Transverse colon (tissue), 4 donors: ENCODE measurements at regions of chr17 and their contacts with region 1.

Region 1: DNA sequence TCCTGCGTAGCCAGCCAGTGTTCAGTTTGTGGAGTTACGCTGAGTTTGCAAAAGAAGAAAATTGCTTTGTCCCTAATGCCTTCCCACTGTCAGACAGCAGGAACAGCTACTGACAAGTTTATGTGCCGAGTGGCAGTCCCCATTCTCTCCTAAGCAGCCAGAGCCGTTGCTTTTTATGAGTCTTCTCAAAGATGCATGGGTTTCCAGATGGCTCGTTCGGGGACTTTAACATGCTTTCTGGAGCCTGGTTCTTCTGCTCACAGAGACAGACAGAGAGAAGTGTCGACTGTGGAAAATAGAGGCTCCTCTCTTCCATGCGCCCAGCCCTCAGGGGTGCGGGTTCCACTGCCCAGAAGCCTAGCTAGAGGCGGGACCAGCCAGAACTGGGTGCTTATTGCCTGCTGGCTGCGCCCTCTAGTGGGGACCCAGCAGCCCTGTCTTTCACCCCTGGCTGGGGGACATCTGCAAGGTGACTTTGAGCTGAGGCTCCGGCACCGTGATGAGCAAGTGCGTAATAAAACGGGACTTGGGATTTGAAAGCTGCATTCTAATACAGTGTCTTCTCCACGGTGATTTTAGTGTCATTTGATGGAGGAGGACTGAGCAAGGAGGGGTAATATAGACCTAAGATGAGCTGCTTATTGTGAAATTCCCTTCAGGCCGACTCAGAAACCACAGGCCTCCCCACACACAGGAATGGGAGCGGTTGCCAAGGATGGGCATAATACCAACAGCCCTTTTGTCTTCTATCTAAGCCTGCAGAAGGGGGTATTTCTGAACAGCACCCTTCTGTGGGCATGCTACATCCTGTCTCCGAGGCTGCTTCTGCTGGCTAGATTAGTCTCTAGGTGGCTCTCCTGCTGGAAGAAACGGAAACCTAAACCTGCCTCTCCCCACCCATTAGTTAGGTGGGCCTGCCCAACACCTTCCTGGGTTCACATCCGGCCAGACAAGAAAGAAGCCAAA is 73.1 kb downstream of the CCDC182 start:
- DNase-seq: peak; percentile 71
- H3K4me3 ChIP-seq: no peak overlapping the region
- H3K27ac ChIP-seq: no peak overlapping the region
- H3K4me1 ChIP-seq: peaks cover 0 to 5% (median 2%) of the 10 kb centered on the region in 4 donors
- H3K27me3 ChIP-seq: no peaks in the 10 kb centered on the region
- CTCF ChIP-seq: peak; percentile 83 to 93 (median 93)
- EP300 ChIP-seq: no peak
- POLR2A ChIP-seq: no peak

Region 2: DNA sequence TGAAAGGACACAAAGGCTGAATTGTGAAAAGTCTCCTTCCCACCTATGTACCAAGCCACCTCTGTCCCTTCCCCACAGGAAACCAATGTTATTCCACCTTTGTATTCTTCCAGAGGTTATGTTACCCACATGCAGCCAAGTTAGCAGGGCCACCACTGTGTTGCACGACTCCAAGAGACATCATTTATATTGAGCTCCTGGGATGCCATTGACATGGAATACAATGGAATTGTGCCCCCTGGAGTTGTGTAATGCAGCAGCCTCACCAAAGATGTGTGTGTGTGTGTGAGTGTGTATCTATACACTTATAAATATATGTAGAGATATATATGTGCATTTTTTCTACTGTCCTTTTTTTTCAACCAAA is 437.2 kb before region 1 on chr17:
- in situ Hi-C with region 1: loop called in 1 of 4 experiments (anchors 10 kb)
- intact Hi-C with region 1: no loop called
- DNase-seq: no peak
- H3K4me3 ChIP-seq: no peak overlapping the region
- H3K27ac ChIP-seq: no peak overlapping the region
- H3K4me1 ChIP-seq: no peaks in the 10 kb centered on the region
- H3K27me3 ChIP-seq: no peaks in the 10 kb centered on the region
- CTCF ChIP-seq: no peak
- EP300 ChIP-seq: no peak
- POLR2A ChIP-seq: no peak

Region 3: DNA sequence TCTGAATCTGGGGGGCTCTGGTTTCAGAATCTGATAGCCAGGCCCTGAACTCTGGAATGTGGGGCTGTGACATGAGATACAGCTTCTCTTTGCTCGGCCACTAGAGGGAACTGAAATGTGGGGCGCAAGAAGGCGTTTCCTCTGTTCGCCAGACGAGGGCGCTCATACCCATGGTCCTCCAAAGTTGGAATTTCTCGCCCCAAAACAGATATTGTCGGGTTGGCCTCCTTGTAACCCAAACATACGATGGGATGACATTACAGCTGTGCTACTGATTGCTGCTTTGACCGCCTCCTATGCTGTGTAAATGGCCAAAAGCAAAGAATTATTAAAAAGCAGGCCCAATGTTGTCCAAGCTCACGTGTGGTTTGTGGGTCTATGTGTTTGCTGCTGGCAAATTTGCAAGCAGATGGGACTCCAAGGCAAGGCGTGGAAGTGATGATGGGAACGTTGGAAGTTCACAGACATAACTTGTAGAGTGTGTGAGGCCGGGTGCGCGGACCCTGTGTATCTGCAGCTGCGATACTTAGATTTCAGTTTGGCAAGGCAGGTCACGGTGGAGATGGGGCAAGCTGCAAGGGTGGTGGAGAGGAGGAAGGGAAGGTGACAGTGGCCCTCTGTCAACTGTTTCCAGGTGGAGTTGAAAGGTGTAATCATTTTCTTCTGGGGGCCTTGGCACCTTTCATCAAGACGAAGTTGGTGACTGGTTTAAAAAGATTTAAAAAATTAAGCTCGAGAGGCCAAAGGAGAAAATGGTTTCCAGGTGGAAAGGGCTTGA is 428.6 kb before region 1 on chr17:
- in situ Hi-C with region 1: loop called in 3 of 4 experiments (anchors 10 kb)
- intact Hi-C with region 1: loop called (anchors 5 kb)
- DNase-seq: peak; percentile 79
- H3K4me3 ChIP-seq: no peak overlapping the region
- H3K27ac ChIP-seq: no peak overlapping the region
- H3K4me1 ChIP-seq: no peaks in the 10 kb centered on the region
- H3K27me3 ChIP-seq: no peaks in the 10 kb centered on the region
- CTCF ChIP-seq: peak; percentile 98 to 99 (median 98)
- EP300 ChIP-seq: no peak
- POLR2A ChIP-seq: no peak